Left ventricle myocardium inferior (tissue), 1 donor: ENCODE measurements at regions of chr1 and their contacts with region 1.

Region 1: DNA sequence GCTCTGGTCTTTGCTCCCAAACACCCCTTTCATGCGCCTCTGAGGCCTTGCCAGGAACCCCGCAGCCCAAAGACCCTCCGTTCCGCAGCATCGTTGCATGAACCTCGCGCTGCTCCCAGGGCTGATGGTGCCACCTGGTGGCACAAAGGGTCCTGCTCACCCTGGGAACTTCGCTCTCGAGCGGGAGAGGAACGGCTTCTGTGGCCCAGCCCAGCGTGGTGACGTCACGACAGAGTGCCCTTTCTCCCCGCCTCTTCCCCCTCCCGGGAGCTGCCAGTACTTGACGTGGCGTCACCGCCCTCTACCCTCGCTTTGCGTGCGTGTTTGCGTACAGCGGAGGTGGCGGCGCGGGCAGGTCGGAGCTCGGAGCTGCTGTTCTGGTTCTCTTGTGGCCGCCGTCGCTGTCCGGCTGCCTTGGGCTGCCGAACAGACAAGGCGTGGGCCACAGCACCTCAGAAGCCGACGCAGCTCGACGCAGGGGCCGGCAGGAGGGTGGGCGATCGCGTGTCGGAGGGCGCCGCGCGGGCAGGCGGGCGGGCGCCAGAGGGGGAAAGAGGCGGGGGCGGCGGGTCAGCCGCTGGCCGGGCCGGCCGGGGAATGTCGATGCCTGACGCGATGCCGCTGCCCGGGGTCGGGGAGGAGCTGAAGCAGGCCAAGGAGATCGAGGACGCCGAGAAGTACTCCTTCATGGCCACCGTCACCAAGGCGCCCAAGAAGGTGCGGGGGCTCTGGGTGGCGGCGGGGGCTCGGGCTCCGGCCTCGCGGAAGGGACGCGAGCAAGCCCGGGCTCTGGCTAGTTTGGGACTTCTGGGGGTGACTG is at the start of gene AHCYL1:
- DNase-seq: peak; percentile 100
- H3K4me3 ChIP-seq: peak within 1 kb of the TSS; percentile 92
- H3K27ac ChIP-seq: peak within 1 kb of the TSS; percentile 98
- H3K4me1 ChIP-seq: peaks cover 74% of the 10 kb centered on the region
- H3K27me3 ChIP-seq: no peaks in the 10 kb centered on the region
- CTCF ChIP-seq: no peak
- total RNA-seq, gene AHCYL1: 45.2 TPM

Region 2: DNA sequence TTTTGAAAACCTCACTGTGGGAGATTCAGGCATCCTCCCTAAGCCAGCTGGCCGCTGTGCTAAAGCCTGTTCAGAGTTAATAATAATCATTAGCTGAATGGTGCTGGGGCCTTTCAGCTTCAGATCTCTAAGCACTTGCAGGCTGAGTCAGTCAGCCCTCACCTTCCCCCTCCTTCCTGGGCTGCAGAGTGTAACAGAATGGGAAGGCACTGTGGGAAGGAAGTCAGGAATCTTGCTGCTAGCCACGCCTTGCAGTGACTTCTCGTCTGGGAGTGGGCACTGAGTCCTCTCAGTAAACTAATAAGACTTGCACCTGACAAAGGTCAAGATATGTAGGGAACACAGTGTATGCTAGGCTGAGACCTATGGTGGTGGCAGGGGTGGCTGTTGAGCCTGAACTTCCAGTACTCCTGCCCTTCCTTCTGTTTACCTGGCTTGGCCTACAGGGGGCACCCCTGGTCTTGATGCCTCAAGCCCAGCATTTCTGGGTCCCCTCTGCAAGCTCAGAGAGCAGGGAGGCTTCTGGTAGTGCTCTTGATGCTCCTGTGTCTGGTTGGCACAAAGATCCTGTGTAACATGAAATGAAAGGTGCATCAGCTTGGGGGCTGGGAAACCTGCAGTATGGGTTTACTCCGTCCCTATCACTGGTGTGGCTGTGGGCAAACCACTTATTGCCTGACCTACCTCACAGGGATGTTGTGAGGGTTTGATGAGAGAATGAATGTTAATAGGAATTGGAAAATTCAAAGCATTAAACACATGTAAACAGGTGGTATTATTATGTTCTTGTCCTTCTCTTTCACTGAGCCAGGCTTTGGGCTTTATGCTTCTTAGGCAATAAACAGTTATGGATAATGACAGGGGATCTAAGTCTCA is 484.8 kb before region 1 on chr1:
- intact Hi-C with region 1: no loop called
- DNase-seq: no peak
- H3K4me3 ChIP-seq: no peak overlapping the region
- H3K27ac ChIP-seq: no peak overlapping the region
- H3K4me1 ChIP-seq: peaks cover 10% of the 10 kb centered on the region
- H3K27me3 ChIP-seq: no peaks in the 10 kb centered on the region
- CTCF ChIP-seq: peak; percentile 49

Region 3: GRCh38 chr1:109548321-109549267 is 436.1 kb before region 1 on chr1 and contains the start of gene GNAI3:
- intact Hi-C with region 1: loop called (anchors 10 kb)
- DNase-seq: peak; percentile 96
- H3K4me3 ChIP-seq: peak within 1 kb of the TSS; percentile 91
- H3K27ac ChIP-seq: peak within 1 kb of the TSS; percentile 93
- H3K4me1 ChIP-seq: peaks cover 70% of the 10 kb centered on the region
- H3K27me3 ChIP-seq: no peaks in the 10 kb centered on the region
- CTCF ChIP-seq: no peak
- total RNA-seq, gene GNAI3: 2.0 TPM

Region 4: GRCh38 chr1:109773146-109773899 is 211.3 kb before region 1 on chr1:
- intact Hi-C with region 1: loop called (anchors 2 kb)
- DNase-seq: peak; percentile 80
- H3K4me3 ChIP-seq: no peak overlapping the region
- H3K27ac ChIP-seq: no peak overlapping the region
- H3K4me1 ChIP-seq: peaks cover 21% of the 10 kb centered on the region
- H3K27me3 ChIP-seq: no peaks in the 10 kb centered on the region
- CTCF ChIP-seq: peak; percentile 91

Region 5: DNA sequence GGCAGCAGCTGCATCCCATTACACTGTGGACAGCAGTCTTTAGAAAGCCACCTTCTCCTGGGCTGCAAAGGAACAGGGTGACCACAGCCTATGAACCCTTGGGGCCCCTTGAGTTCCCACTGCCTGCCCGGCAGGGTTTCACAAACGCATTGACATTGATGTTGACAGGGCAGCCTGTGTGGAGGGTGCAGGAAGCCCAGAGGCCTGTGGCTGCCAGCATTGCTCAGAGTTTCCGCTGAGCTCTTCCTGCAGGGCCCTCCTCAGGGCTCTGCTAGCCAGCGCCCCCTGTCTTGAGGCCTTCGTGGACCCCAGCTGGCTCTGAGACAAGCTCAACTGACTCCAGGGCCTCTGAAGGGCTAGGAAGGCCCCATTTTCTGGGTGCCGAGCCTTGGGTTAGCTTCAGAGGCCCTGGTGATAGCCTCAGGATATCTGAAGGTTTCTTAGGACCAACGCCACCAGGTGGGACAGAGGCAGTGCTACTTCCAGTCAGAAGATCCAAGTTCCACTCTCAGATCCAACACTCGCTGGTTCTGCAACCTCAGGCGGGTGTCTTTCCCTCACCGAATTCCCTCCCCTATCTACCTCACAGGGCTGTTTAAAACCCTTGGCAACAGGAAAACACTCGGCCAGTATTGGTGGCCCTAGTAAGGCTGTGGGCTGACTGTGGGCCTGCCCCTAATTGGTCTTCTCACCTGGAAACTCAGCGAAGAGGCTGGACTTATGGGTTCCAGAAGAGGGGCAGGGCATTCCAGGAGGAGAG is 193.8 kb before region 1 on chr1:
- intact Hi-C with region 1: loop called (anchors 5 kb)
- DNase-seq: peak; percentile 39
- H3K4me3 ChIP-seq: no peak overlapping the region
- H3K27ac ChIP-seq: peak overlapping the region; percentile 59
- H3K4me1 ChIP-seq: peaks cover 63% of the 10 kb centered on the region
- H3K27me3 ChIP-seq: no peaks in the 10 kb centered on the region
- CTCF ChIP-seq: peak; percentile 60

Region 6: DNA sequence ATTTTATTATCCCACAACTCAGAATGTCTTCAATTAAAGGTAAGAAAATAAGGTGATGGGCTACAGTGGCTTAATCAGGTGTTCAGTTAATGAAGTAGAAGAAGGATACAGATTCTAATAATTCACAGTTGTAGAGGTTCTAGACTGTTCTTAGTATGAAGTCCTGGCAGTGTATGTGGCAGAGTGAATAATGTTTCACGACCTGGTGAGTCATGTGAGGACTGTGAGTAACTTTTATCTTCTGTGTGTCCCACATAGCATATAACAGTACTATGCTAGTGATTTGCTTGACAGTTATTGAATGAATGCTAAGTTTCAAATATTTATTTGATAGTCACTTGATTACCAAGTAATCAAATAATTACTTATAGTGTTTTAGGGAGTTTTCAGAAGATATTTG is 386.2 kb after region 1 on chr1:
- intact Hi-C with region 1: no loop called
- DNase-seq: no peak
- H3K4me3 ChIP-seq: no peak overlapping the region
- H3K27ac ChIP-seq: no peak overlapping the region
- H3K4me1 ChIP-seq: peaks cover 3% of the 10 kb centered on the region
- H3K27me3 ChIP-seq: no peaks in the 10 kb centered on the region
- CTCF ChIP-seq: no peak